Left cardiac atrium (tissue), 4 donors: ENCODE measurements at regions of chr9 and their contacts with region 1.

Region 1: GRCh38 chr9:129884220-129885017 is 49.2 kb downstream of the USP20 start:
- DNase-seq: peak; percentile 91
- ATAC-seq: peak; percentile 81 to 82

Region 2: DNA sequence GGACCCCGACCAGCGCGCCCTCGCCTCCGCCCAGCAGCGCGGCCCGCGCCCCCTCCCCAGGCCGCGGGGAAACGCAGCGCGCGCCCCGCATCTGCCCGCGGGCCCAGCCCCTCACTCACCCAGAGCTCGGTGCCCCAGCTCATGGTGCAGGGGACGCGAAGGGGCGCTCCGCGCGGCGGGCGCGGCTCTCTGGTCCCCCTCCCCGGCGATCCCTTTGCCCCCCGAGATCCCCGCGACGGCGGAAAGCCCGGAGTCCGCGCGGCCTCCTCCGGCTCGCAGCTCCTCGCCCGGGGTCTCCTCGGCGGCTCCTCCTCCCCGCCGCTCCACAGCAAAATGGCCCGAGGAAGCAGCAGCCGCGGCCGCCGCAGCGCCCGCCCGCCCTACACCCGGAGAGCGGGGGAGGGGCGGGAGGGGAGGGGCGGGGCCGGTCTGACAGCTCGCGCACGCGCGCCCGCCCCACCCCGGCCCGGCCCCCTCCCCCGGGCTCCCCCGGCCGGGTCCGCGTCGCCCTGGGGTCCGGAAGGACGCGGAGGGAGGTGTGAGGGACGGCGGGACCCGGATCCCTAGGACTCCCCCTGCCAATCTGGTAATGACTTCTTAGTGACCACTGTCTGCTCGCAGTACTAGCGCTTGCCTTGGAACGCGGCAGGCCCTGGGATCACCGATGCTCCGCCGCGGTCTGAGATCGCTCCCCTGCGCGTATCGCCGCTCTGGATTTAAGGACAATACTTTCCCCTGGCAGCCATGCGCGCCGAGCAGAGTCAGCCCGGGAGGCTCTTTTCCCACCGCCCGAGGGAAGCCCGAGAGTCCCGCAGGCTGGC is 158.6 kb after region 1 on chr9 and contains the start of gene FNBP1:
- intact Hi-C with region 1: loop called in 1 of 2 experiments (anchors 5 kb)
- DNase-seq: peak; percentile 82
- ATAC-seq: peak; percentile 95 to 96
- total RNA-seq, gene FNBP1: 27.7 to 29.0 TPM

Region 3: DNA sequence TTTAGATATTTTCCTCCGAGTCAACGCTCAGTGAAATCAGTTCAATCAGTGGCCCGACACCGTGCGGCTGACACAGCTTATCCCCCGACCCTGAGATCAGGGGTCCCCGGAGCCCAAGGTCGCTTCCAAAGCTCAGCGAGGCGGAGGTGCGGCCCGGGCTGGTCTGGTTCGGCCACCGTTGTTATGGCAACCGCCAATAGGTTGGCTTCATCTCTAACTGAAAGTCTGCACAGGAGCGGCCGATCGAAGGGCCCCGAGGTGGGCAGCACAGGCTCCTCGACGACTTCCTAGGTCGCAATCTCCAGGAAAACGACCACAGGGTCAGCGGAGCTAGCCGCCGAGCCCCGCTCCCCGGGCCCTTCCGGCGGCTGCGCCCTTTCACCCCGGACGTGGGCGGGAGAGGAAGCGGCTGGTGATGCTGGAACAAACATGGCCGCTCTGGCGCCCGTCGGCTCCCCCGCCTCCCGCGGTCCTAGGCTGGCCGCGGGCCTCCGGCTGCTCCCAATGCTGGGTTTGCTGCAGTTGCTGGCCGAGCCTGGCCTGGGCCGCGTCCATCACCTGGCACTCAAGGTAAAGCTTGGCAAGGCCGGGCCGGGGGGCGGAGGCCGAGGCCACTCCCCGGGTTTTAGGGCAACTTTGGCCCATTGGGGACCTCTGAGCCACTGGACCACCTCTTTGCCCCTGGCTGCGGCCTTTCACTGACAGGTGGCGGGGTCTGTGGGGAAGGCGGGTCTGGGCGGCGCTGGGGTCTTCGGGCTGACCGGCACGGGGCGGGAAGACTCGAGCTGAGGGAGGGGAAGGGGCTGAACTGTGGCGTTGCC is 169.3 kb after region 1 on chr9 and contains the start of gene GPR107:
- intact Hi-C with region 1: loop called in 1 of 2 experiments (anchors 10 kb)
- DNase-seq: peak; percentile 87
- ATAC-seq: peak; percentile 98
- total RNA-seq, gene GPR107: 23.6 to 27.6 TPM

Region 4: DNA sequence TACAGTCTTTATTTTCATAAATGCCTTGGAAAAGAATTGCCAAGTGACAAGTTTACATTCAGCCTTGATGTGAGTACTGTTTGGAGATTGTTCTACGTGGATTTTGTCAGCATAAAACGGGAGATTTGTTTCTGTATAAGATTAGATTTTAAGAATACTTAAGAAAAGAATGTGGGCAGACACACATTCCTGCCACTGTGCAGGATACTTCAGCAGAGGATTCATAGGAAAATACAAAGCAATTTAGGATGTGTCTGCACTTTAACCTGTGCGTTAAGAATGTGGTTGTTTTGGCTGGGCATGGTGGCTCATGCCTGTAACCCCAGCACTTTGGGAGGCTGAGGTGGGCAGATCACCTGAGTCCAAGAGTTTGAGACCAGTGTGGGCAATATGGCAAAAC is 206.5 kb after region 1 on chr9:
- intact Hi-C with region 1: loop called in 1 of 2 experiments (anchors 10 kb)
- DNase-seq: no peak
- ATAC-seq: no peak

Region 5: GRCh38 chr9:130101915-130102314 is 217.5 kb after region 1 on chr9:
- intact Hi-C with region 1: loop called (anchors 2 to 10 kb)
- DNase-seq: no peak
- ATAC-seq: peak; percentile 60 to 75

Region 6: GRCh38 chr9:130235897-130236668 is 351.7 kb after region 1 on chr9:
- intact Hi-C with region 1: loop called in 1 of 2 experiments (anchors 5 kb)
- DNase-seq: peak; percentile 74
- ATAC-seq: peak; percentile 51